Panc1 (cell line): ENCODE measurements at regions of chr7 and their contacts with region 1.

Region 1: GRCh38 chr7:149125863-149126661 is at the start of gene ZNF425:
- DNase-seq: peak; percentile 59
- ATAC-seq: peak; percentile 91
- H3K4me3 ChIP-seq: peak within 1 kb of the TSS; percentile 86 to 88
- H3K27ac ChIP-seq: peak within 1 kb of the TSS; percentile 86
- H3K4me1 ChIP-seq: peaks cover 5% of the 10 kb centered on the region
- H3K27me3 ChIP-seq: no peaks in the 10 kb centered on the region
- CTCF ChIP-seq: peak; percentile 98
- total RNA-seq, gene ZNF425: 3.0 TPM

Region 2: GRCh38 chr7:148698397-148699023 is 427.6 kb before region 1 on chr7 and contains the start of gene CUL1:
- CTCF ChIA-PET with region 1: no interaction called
- POLR2A ChIA-PET with region 1: interaction called, 12 read pairs
- in situ Hi-C with region 1: no loop called
- intact Hi-C with region 1: no loop called
- DNase-seq: no peak
- ATAC-seq: peak; percentile 96
- H3K4me3 ChIP-seq: peak within 1 kb of the TSS; percentile 69 to 72
- H3K27ac ChIP-seq: peak within 1 kb of the TSS; percentile 87
- H3K4me1 ChIP-seq: peaks cover 35% of the 10 kb centered on the region
- H3K27me3 ChIP-seq: no peaks in the 10 kb centered on the region
- CTCF ChIP-seq: no peak
- total RNA-seq, gene CUL1: 60.6 TPM

Region 3: DNA sequence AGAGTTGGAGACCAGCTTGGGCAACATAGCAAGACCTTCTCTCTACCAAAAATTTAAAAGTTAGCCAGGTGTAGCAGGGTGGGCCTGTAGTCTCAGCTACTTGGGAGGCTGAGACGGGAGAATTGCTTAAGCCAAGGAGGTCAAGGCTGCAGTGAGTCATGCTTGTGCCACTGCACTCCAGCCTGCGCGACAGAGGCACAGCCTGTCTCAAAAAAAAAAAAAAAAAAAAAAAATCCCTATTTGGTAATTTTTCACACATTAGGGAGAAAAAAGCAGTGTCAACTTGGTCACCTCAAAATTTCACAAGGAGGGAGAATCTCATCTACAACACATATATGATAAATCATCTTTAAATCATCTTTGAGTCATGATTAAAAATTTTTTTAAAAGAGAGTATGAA is 14.8 kb after region 1 on chr7:
- CTCF ChIA-PET with region 1: interaction called, 4 read pairs
- POLR2A ChIA-PET with region 1: interaction called, 14 read pairs
- in situ Hi-C with region 1: no loop called
- intact Hi-C with region 1: no loop called
- DNase-seq: no peak
- ATAC-seq: no peak
- H3K4me3 ChIP-seq: no peak overlapping the region
- H3K27ac ChIP-seq: no peak overlapping the region
- H3K4me1 ChIP-seq: peaks cover 18% of the 10 kb centered on the region
- H3K27me3 ChIP-seq: no peaks in the 10 kb centered on the region
- CTCF ChIP-seq: no peak